GM12878 (cell line): ENCODE measurements at regions of chrX and their contacts with region 1.

Region 1: DNA sequence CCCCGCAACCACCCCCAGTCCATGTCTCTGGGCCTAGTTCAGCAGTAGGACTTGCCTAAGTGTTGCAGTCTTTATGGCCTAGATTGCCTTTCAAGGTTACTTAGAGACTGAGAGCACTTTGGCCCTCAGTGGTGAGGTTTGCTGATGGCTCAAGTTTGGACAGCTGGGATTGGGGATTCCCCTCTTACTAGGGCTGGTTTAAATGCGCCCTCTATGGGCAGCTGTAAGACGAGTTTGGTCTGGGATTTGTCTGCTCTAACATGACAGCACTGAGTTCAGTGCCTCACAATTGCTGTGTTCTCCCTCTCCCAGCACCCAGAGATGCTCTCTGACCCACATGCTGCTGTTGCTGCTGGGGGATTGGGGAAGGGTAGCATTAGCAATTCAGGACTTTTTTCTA is 23.1 kb downstream of the DACH2 start:
- DNase-seq: no peak
- ATAC-seq: peak; percentile 84
- H3K4me3 ChIP-seq: no peak overlapping the region
- H3K27ac ChIP-seq: no peak overlapping the region
- H3K4me1 ChIP-seq: no peaks in the 10 kb centered on the region
- H3K27me3 ChIP-seq: no peaks in the 10 kb centered on the region
- CTCF ChIP-seq: peak; percentile 34 to 48 (median 40); a peak in 5 of 6 replicates
- EP300 ChIP-seq: no peak
- POLR2A ChIP-seq: no peak
- RAD21 ChIP-seq: peak; percentile 54

Region 2: DNA sequence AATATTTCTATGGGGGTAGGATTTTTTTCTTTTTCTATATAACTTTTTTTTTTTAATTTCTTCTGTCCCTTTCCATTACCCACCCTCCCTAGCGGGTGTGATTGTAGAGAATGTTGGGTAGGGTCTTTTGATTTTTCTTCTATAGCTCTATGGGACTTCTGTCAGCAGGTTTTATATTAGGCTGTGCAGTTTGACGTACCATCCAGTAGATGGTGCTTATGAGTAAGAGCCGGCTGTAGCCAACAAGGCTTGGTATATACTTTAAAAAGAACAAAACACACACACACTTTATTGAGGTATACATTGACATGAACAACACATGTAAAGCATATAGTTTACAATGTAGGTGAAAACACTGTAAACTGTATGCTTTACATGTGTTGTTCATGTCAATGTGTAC is 544.0 kb before region 1 on chrX:
- CTCF ChIA-PET with region 1: interaction called, 10 read pairs
- POLR2A ChIA-PET with region 1: no interaction called
- RAD21 ChIA-PET with region 1: interaction called, 4 read pairs
- SMC1A ChIA-PET with region 1: interaction called, 3 read pairs
- in situ Hi-C with region 1: no loop called
- intact Hi-C with region 1: no loop called
- DNase-seq: no peak
- ATAC-seq: peak; percentile 72
- H3K4me3 ChIP-seq: no peak overlapping the region
- H3K27ac ChIP-seq: no peak overlapping the region
- H3K4me1 ChIP-seq: no peaks in the 10 kb centered on the region
- H3K27me3 ChIP-seq: no peaks in the 10 kb centered on the region
- CTCF ChIP-seq: peak; percentile 46 to 61 (median 50)
- EP300 ChIP-seq: no peak
- POLR2A ChIP-seq: no peak
- RAD21 ChIP-seq: peak; percentile 52; the same call in 1 of the 2 replicates

Region 3: GRCh38 chrX:85851418-85851817 is 319.9 kb before region 1 on chrX:
- CTCF ChIA-PET with region 1: no interaction called
- POLR2A ChIA-PET with region 1: no interaction called
- RAD21 ChIA-PET with region 1: no interaction called
- SMC1A ChIA-PET with region 1: interaction called, 6 read pairs
- in situ Hi-C with region 1: no loop called
- intact Hi-C with region 1: loop called (anchors 1 kb)
- DNase-seq: no peak
- ATAC-seq: peak; percentile 70
- H3K4me3 ChIP-seq: no peak overlapping the region
- H3K27ac ChIP-seq: no peak overlapping the region
- H3K4me1 ChIP-seq: no peaks in the 10 kb centered on the region
- H3K27me3 ChIP-seq: no peaks in the 10 kb centered on the region
- CTCF ChIP-seq: peak; percentile 33 to 45 (median 42); a peak in 5 of 6 replicates
- EP300 ChIP-seq: no peak
- POLR2A ChIP-seq: no peak
- RAD21 ChIP-seq: peak; percentile 66

Region 4: DNA sequence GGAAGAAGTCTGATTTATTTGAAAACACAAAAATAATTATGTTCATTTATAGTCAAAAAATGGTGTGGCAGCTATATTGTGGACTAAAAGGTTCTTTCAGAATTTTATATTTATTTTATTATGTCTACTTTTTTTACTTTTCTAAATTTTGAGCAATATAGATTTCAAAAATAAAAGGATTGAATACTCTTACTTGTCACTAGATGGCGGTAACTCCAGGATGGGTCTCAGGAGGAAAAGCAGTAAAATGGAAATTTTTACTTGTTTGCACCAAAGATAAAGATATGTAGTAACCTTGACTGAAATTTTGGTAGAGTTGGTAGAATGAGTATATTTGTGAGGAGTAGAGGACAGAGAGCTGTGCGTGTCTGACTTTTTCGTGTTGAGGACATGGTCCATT is 37.6 kb before region 1 on chrX:
- CTCF ChIA-PET with region 1: interaction called, 11 read pairs
- POLR2A ChIA-PET with region 1: no interaction called
- RAD21 ChIA-PET with region 1: no interaction called
- SMC1A ChIA-PET with region 1: no interaction called
- in situ Hi-C with region 1: no loop called
- intact Hi-C with region 1: no loop called
- DNase-seq: no peak
- ATAC-seq: peak; percentile 57
- H3K4me3 ChIP-seq: no peak overlapping the region
- H3K27ac ChIP-seq: no peak overlapping the region
- H3K4me1 ChIP-seq: no peaks in the 10 kb centered on the region
- H3K27me3 ChIP-seq: no peaks in the 10 kb centered on the region
- CTCF ChIP-seq: peak; percentile 40 to 47 (median 45); a peak in 4 of 6 replicates
- EP300 ChIP-seq: no peak
- POLR2A ChIP-seq: no peak
- RAD21 ChIP-seq: peak; percentile 39; the same call in 1 of the 2 replicates

Region 5: GRCh38 chrX:86806788-86807187 is 635.4 kb after region 1 on chrX:
- CTCF ChIA-PET with region 1: no interaction called
- POLR2A ChIA-PET with region 1: no interaction called
- RAD21 ChIA-PET with region 1: no interaction called
- SMC1A ChIA-PET with region 1: no interaction called
- in situ Hi-C with region 1: no loop called
- intact Hi-C with region 1: no loop called
- DNase-seq: no peak
- ATAC-seq: peak; percentile 68
- H3K4me3 ChIP-seq: no peak overlapping the region
- H3K27ac ChIP-seq: no peak overlapping the region
- H3K4me1 ChIP-seq: no peaks in the 10 kb centered on the region
- H3K27me3 ChIP-seq: no peaks in the 10 kb centered on the region
- CTCF ChIP-seq: peak; percentile 47 to 53 (median 49); a peak in 5 of 6 replicates
- EP300 ChIP-seq: no peak
- POLR2A ChIP-seq: no peak
- RAD21 ChIP-seq: peak; percentile 41